ENCODE measurements at regions of chr4 and their contacts with region 1.

Region 1: DNA sequence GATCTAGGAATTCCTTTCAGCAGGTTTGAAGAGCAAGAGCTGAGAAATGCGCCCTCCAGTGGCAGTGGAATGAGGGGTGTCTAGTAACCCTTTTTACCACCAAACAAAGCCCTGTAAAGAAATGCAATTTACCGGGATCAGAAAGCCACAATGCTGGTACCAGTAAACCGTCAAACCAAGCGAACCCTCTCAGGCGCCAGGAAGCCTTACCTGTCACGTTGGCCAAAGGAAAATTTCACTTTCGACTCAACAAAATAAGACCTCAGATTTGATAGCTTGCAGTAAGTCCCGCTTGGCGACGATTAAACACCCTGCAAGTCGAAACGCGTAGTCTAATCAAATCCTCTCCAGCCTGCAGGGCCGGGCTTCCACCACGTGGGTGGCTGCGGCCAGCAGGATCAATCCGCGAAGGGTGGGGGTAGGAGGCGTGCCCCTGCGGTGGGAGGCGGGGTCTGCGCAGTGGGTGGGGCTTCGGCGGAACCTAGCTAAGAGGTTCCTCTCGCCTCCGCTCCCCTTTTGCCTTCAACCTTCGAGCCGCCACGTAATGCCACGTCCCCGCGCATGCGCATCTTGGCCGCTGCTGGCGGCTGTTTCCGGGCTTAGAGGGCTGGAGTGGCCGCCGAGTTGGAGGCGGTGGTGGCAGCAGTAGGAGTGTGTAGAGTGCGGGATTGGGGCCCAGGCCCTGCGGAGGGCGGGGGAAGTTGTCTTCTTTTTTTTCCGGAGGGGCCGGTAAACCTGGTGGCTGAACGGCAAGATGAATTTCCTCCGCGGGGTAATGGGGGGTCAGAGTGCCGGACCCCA is at the start of gene USO1:
- DNase-seq: peak; percentile 99
- ATAC-seq: peak; percentile 97
- H3K4me3 ChIP-seq: peak within 1 kb of the TSS; percentile 70
- H3K27ac ChIP-seq: peak within 1 kb of the TSS; percentile 87
- H3K4me1 ChIP-seq: peaks cover 6% of the 10 kb centered on the region; the same call in 1 of the 2 replicates
- H3K27me3 ChIP-seq: no peaks in the 10 kb centered on the region
- CTCF ChIP-seq: peak; percentile 72
- POLR2A ChIP-seq: peak; percentile 98
- RAD21 ChIP-seq: peak; percentile 59
- total RNA-seq, gene USO1: 121 and 181 TPM in 2 replicates

Region 2: GRCh38 chr4:75653845-75654503 is 70.3 kb before region 1 on chr4:
- CTCF ChIA-PET with region 1: interaction called, 6 read pairs
- POLR2A ChIA-PET with region 1: interaction called, 7 read pairs
- dilution Hi-C with region 1: no loop called
- in situ Hi-C with region 1: no loop called
- intact Hi-C with region 1: loop called (anchors 5 kb)
- DNase-seq: peak; percentile 55
- ATAC-seq: peak; percentile 61; the same call in 1 of the 2 replicates
- H3K4me3 ChIP-seq: no peak overlapping the region
- H3K27ac ChIP-seq: no peak overlapping the region
- H3K4me1 ChIP-seq: no peaks in the 10 kb centered on the region
- H3K27me3 ChIP-seq: no peaks in the 10 kb centered on the region
- CTCF ChIP-seq: peak; percentile 51
- POLR2A ChIP-seq: no peak
- RAD21 ChIP-seq: peak; percentile 62

Region 3: GRCh38 chr4:75673027-75673958 is 51.0 kb before region 1 on chr4 and contains the start of gene G3BP2:
- CTCF ChIA-PET with region 1: interaction called, 8 read pairs
- POLR2A ChIA-PET with region 1: interaction called, 5 read pairs
- dilution Hi-C with region 1: no loop called
- in situ Hi-C with region 1: no loop called
- intact Hi-C with region 1: loop called (anchors 1 kb)
- DNase-seq: peak; percentile 98
- ATAC-seq: peak; percentile 98
- H3K4me3 ChIP-seq: peak within 1 kb of the TSS; percentile 93
- H3K27ac ChIP-seq: peak within 1 kb of the TSS; percentile 83
- H3K4me1 ChIP-seq: peaks cover 4% of the 10 kb centered on the region
- H3K27me3 ChIP-seq: no peaks in the 10 kb centered on the region
- CTCF ChIP-seq: no peak
- POLR2A ChIP-seq: peak; percentile 78
- RAD21 ChIP-seq: no peak
- total RNA-seq, gene G3BP2: 183 and 306 TPM in 2 replicates

Region 4: DNA sequence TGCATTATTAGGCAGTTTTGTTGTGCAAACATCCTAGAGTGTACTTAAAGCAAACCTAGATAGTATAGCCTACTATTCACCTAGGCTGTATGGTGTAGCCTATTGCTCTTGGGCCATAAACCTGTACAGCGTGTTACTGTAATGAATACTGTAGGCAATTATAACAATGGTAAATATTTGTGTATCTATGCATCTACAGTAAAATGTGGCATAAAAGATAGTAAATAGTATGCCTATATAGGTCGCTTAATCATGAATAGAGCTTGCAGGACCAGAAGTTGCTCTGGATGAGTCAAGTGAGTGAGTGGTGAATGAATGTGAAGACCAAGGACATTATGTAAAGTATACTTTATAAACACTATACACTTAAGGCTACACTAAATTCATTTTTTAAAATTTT is 16.8 kb after region 1 on chr4:
- CTCF ChIA-PET with region 1: interaction called, 10 read pairs
- POLR2A ChIA-PET with region 1: no interaction called
- dilution Hi-C with region 1: no loop called
- in situ Hi-C with region 1: no loop called
- intact Hi-C with region 1: no loop called
- DNase-seq: peak; percentile 35
- ATAC-seq: no peak
- H3K4me3 ChIP-seq: no peak overlapping the region
- H3K27ac ChIP-seq: no peak overlapping the region
- H3K4me1 ChIP-seq: peaks cover 5% of the 10 kb centered on the region
- H3K27me3 ChIP-seq: no peaks in the 10 kb centered on the region
- CTCF ChIP-seq: no peak
- POLR2A ChIP-seq: no peak
- RAD21 ChIP-seq: no peak

Region 5: DNA sequence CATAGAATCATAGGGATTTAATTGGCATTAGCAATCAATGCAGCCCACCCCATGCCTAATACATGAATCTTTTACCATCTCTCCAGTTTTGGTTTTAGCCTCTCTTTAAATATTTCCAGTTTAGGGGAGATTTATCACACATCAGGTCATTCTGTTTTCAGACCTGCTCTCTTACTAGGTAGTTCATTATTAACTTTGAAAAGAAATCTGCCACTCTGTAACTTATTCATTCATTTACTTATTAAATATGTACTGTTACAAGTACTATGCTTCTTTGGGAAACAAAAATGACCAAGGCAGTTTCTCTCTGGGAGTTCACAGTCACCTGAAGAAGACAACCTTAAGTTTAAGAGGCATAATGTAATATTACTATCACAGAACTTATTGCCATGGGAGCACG is 62.3 kb after region 1 on chr4:
- CTCF ChIA-PET with region 1: no interaction called
- POLR2A ChIA-PET with region 1: no interaction called
- dilution Hi-C with region 1: no loop called
- in situ Hi-C with region 1: no loop called
- intact Hi-C with region 1: no loop called
- DNase-seq: no peak
- ATAC-seq: no peak
- H3K4me3 ChIP-seq: no peak overlapping the region
- H3K27ac ChIP-seq: no peak overlapping the region
- H3K4me1 ChIP-seq: 0 out of 2 replicates have a peak, but pooled peaks cover 1% of the 10 kb centered on the region
- H3K27me3 ChIP-seq: no peaks in the 10 kb centered on the region
- CTCF ChIP-seq: no peak
- POLR2A ChIP-seq: no peak
- RAD21 ChIP-seq: no peak

Region 6: GRCh38 chr4:75849461-75849860 is 125.2 kb after region 1 on chr4:
- CTCF ChIA-PET with region 1: interaction called, 6 read pairs
- POLR2A ChIA-PET with region 1: no interaction called
- dilution Hi-C with region 1: no loop called
- in situ Hi-C with region 1: no loop called
- intact Hi-C with region 1: loop called (anchors 2 kb)
- DNase-seq: no peak
- ATAC-seq: no peak
- H3K4me3 ChIP-seq: no peak overlapping the region
- H3K27ac ChIP-seq: no peak overlapping the region
- H3K4me1 ChIP-seq: peaks cover 10% of the 10 kb centered on the region
- H3K27me3 ChIP-seq: peaks cover 7% of the 10 kb centered on the region
- CTCF ChIP-seq: no peak
- POLR2A ChIP-seq: no peak
- RAD21 ChIP-seq: no peak

Measured in IMR-90 (cell line).